ENCODE measurements at regions of chr4 and their contacts with region 1.

Region 1: DNA sequence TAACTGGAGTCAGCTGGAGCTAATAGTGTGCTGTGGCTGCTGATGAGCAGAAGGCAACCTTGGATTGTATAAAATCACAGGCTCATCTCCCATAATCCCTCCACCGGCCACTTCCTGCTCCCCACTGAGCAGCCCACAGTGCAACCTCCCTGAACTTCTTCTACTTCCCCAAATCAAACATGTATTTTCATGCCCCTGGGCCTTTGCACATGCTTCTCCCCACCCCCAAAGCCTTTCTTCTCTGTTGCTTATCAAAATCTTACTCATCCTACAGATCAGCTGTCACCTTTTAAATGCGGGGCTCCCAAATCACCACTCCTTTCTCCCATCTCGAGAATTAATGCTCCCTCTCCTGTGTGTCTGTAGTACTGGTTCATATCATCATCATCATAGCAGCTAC is 35.8 kb downstream of the RHOH start:
- DNase-seq: no peak
- H3K4me3 ChIP-seq: no peak overlapping the region
- H3K27ac ChIP-seq: no peak overlapping the region
- H3K4me1 ChIP-seq: peaks cover 4% of the 10 kb centered on the region
- CTCF ChIP-seq: no peak

Region 2: GRCh38 chr4:40221744-40222143 is 10.9 kb before region 1 on chr4:
- CTCF ChIA-PET with region 1: interaction called, 3 read pairs
- POLR2A ChIA-PET with region 1: interaction called, 15 read pairs
- intact Hi-C with region 1: no loop called
- DNase-seq: no peak
- H3K4me3 ChIP-seq: no peak overlapping the region
- H3K27ac ChIP-seq: peak overlapping the region; percentile 20
- H3K4me1 ChIP-seq: peaks cover 70% of the 10 kb centered on the region
- CTCF ChIP-seq: no peak

Measured in OCI-LY7 (cell line).